Left colon (tissue), 2 donors: ENCODE measurements at regions of chr3 and their contacts with region 1.

Region 1: DNA sequence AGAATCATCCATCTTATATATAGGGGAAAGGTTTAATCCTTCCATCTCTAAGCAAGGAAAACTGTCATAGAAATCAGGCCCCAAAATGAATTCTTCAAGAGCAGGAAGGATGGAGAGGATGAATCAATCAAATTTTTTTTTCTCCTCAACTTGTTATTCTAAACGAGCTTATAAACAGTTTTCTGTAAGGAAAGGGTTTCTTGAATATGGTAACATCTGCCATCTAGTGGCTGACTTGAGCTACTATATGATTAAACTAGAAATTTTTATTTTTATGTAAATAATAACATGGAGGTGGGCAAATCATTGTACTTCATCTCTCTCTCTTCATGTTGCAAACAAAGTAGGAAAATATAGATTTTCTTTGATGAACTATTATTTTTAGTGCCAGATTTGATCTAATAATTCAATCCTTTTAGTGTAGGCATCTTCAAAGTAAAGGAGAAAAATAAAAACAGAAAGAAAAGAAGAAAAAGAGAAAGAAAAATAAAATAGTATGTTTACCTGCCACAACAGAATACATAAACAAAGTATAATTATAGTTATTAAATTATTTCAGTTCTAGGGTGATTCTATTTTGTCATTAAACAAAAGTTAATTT is 146.6 kb downstream of the SERPINI1 start:
- DNase-seq: no peak
- ATAC-seq: peak; percentile 46

Region 2: DNA sequence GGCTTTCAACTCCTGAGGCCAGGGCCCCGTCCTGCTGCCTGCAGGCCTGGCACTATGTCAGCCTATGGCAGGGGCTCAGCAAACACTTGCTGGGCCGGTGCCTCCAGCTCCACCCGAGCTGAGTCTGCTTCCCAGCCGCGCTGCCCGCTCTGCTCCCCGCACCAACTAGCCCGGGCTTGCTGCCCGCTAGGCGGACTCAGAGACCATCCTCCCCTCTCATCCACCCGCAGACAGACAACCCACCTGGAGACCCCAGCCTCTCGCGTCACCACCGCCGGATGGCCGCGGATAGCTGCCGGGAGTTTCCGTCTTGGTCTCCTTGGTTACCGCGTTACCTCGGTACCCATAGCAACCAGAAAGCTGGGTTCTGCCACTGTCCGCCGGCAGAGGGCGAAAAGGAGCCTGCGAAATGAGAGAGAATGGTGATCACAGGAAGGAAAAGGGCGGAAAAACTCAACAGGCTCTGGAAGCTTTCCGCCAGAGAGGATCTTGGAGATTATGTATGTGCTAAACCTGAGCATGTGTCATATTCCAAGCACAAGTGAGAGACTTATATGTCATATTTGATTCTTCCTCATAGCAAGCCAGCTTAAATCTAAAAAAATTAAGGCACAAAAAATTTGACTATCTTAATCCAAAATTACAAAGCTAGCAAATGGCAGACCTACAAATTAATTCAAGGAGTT is 502.0 kb before region 1 on chr3 and contains the start of gene ZBBX:
- intact Hi-C with region 1: loop called in 1 of 2 experiments (anchors 5 kb)
- DNase-seq: peak; percentile 63 to 87
- ATAC-seq: peak; percentile 100
- total RNA-seq, gene ZBBX: not detected

Region 3: DNA sequence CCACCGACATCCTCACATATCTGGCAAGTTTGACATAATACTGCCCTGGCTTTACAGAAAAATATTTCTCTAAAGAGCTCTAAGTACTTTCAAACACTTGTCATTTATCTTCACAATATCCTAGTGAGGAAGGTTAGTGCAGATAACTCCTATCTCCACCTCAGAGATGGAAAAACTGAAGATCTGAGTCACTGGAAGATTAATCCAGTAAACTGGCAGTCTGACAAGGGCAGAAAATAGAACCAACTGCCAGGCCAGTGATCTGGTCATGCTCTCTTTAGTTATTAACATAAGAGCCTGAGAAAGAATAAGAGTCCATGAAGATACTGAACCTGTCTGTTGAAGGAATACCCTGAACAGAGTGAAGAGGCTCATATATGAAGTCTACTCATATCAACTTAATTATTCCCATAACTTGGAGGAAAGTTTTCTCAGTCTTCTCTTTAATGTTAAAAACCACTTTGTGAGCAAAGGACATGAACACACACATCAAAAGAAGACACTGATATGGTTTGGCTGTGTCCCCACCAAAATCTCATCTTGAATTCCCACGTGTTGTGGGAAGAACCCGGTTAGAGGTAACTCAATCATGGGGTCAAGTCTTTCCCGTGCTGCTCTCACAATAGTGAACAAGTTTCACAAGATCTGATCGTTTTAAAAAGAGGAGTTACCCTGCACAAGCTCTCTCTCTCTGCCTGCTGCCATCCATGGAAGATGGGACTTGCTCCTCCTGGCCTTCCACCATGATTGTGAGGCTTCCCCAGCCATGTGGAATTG is 152.2 kb after region 1 on chr3:
- intact Hi-C with region 1: no loop called
- DNase-seq: no peak
- ATAC-seq: no peak